Activated naive CD4-positive, alpha-beta T cell treated with anti-CD3 and anti-CD28 coated beads for 36 hours (primary cell): ENCODE measurements at regions of chr17 and their contacts with region 1.

Region 1: DNA sequence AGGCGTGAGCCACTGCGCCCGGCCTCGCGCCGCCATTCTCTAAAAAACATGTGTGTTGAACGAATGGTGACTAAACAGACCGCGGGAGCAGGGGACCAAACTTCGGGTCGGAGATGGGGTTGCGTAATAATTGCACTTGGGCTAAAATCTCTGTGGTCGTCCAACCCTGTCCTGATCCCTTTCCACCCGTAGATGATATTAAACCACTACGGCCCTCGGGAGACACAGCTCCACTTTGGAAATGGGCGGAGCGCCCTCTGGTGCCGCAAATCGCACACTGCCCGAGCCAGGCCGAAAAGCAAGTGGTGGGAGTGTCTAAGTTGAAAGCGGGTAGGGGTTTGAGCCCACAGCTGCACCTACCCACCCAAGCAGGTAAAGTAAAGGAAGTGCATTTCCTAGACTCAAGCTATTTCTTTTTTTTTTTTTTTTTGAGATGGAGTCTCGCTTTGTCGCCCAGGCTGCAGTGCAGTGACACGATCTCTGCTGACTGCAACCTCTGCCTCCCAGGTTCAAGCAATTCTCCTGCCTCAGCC is 17.0 kb downstream of the CAVIN1 start:
- DNase-seq: peak; percentile 90
- H3K4me3 Mint-ChIP-seq: no peak overlapping the region
- H3K27ac Mint-ChIP-seq: no peak overlapping the region
- H3K4me1 Mint-ChIP-seq: peaks cover 22% of the 10 kb centered on the region
- H3K27me3 Mint-ChIP-seq: no peaks in the 10 kb centered on the region

Region 2: DNA sequence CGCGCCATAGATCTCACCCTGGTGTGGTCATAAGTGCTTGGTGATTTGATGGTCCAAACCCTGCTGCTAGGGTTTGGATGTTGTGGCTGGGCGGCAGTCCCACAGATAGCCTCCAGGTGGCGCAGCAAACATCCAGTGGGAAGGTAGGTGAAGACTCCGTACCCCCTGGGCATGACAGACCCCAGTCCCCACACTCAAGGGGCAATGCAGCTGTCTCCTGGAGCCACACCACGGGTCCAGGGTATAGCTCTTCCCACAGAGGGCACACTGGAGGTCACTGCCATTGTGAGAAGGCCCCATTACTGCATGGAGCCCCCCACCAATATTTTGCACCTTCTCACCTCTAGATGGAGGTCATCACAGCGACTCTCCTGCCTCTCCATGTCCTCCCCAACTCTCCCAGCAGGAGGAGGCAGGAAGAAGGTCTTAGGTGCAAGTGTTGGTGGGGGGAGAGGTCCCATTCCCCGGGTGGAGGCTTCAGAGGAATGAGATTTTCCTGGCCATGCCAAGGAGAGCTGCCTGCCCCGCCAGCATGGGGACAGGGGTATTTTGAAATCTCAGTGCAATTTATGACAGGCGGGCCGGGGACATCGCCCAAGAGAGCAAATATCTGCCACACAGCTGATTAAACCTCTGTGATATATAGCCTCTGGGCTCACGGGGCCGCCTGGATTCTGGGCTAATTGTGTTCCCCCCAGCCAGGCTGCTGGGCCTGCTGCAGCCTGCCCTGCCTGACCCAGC is 338.5 kb before region 1 on chr17:
- CTCF ChIA-PET with region 1: no interaction called
- intact Hi-C with region 1: loop called (anchors 2 kb)
- DNase-seq: peak; percentile 83
- H3K4me3 Mint-ChIP-seq: no peak overlapping the region
- H3K27ac Mint-ChIP-seq: no peak overlapping the region
- H3K4me1 Mint-ChIP-seq: peaks cover 22% of the 10 kb centered on the region
- H3K27me3 Mint-ChIP-seq: peaks cover 15% of the 10 kb centered on the region

Region 3: DNA sequence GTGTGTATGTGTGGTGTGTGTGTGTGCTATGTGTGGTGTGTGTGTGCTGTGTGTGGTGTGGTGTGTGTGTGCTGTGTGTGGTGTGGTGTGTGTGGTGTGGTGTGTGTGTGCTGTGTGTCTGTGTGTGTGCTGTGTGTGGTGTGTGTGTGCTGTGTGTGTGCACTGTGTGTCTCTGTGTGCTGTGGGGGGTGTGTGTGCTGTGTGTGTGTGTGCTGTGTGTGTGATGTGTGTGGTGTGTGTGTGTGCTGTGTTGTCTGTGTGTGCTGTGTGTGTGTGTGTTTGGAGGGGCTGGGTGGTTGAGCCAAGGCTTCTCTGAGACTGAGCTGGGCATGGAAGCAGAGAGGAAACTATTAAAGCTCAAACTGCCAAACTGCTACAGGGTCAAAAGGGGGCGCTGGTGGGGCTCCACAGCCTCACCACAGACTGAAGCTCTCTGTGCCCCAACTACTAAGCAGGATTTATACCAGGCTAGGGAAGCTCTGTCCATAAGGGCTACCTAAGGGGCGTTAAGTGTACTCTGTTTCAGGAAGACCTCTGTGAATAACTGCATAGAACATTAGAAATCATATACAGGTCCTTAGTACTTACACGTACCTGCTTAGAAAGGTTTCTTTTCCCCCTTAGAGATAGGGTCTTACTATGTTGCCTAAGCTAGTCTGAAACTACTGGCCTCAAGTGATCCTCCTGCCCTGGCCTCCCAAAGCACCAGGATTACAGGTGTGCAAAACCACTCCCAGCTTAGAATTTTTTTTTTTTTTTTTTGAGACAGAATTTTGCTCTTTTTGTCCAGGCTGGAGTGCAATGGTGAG is 183.9 kb before region 1 on chr17:
- CTCF ChIA-PET with region 1: interaction called, 77 read pairs
- intact Hi-C with region 1: loop called (anchors 1 kb)
- DNase-seq: peak; percentile 73
- H3K4me3 Mint-ChIP-seq: no peak overlapping the region
- H3K27ac Mint-ChIP-seq: peak overlapping the region; percentile 6
- H3K4me1 Mint-ChIP-seq: peaks cover 2% of the 10 kb centered on the region
- H3K27me3 Mint-ChIP-seq: no peaks in the 10 kb centered on the region

Region 4: DNA sequence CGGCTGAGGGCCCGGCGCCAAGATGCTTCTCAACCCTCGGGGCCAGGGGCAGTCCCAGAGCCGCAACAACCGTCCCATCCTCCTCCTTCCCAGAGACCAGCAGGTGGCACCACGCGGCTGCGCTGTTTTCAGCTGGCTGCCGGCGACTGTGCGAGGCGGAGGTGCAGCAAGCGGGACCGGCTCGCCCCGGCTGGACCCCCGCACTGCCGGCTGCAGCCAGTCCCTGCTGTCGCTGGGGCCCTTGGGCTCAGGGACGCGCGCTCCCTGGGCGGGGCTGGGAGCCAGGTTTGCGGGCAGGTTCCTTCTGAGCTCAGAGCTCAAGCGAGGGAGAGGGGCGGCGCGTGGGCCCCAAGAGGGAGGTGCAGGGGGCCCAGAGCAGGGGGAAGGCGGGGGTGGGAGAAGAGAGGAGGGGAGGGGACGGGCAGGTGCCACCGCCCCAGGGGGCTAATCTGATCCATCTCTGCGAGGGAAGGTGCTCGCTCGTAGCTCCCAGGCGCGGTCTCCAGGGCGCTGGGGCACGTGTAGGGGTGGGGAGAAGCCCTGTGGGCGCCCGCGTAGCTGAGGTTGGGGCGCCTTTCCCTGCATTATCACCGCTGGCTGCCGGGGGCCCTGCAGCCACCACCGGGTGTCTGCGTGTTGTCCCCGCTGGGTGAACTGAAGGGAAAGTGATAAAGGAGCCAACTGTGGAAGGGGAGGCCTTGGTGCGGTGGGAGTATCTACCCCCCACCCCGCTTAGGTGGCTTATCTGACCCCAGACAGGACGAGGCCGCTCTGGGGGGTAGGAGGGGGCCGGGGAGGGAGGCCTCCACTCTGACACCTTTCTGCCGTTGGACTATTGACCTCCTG is 93.5 kb before region 1 on chr17:
- CTCF ChIA-PET with region 1: interaction called, 442 read pairs
- intact Hi-C with region 1: loop called (anchors 1 kb)
- DNase-seq: peak; percentile 95
- H3K4me3 Mint-ChIP-seq: peak overlapping the region; percentile 44
- H3K27ac Mint-ChIP-seq: peak overlapping the region; percentile 92
- H3K4me1 Mint-ChIP-seq: peaks cover 86% of the 10 kb centered on the region
- H3K27me3 Mint-ChIP-seq: no peaks in the 10 kb centered on the region

Region 5: DNA sequence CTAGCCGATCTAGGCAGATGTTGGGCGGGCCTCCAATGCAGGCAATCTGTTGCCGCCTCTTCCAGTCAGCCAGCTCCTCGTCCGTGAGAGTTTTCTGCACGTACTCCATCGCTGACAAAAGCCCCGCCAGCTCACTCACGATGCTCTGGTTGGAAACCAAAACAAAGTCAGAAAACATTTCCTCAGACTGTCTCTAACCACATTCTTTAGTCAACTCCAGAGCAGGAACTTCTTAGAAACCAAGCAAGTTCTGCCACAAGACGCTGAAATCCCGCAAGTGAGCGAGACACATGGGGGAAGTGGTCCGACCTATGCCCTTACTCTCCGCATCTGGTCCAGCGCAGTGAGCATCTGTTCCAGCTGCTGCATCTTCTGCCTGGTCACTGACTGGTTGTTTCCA is 68.6 kb before region 1 on chr17:
- CTCF ChIA-PET with region 1: interaction called, 20 read pairs
- intact Hi-C with region 1: no loop called
- DNase-seq: peak; percentile 92
- H3K4me3 Mint-ChIP-seq: peak overlapping the region; percentile 43
- H3K27ac Mint-ChIP-seq: peak overlapping the region; percentile 90
- H3K4me1 Mint-ChIP-seq: peaks cover 84% of the 10 kb centered on the region
- H3K27me3 Mint-ChIP-seq: no peaks in the 10 kb centered on the region